RWPE1 (cell line): ENCODE measurements at regions of chr12 and their contacts with region 1.

Region 1: GRCh38 chr12:44960856-44961255 is 84.7 kb upstream of the NELL2 start:
- DNase-seq: no peak
- H3K27ac ChIP-seq: no peak overlapping the region
- CTCF ChIP-seq: no peak

Region 2: DNA sequence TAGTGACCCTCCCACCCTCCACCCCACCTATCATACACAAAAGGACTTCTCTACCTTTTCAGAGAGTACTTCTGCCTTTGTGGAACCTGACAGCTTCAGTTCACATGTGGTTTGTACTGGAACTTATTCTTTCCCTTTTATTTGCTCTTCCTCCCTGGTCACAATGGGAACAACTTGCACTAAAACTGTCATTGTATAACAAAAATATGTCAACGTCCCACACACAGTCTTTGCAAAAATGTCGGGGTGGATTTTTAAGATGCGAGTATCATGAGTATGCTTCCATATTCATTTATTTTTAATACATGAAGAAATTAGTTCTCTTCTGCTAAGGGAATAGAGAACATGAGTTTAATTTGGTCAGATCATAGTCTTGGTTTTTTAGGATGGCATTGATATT is 39.1 kb before region 1 on chr12:
- CTCF ChIA-PET with region 1: no interaction called
- POLR2A ChIA-PET with region 1: no interaction called
- DNase-seq: no peak
- H3K27ac ChIP-seq: no peak overlapping the region
- CTCF ChIP-seq: no peak

Region 3: DNA sequence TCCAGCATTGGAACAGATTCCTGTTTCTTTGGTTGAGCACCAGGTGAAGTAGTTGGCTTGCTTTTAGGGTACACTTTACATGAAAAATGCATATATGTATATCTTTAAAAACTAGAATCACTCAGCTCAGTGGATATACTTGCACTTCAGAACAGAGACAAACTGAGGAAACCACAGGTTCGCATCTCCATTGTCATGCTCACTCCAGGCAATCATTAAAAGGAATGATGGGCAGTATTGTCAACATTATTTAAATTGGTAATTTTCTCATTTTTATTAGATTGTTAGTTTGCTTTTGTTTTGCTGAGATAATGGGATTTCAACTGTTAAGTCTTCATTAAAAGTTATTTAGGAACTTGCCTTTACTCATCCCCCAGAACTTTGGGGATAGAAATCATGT is 13.7 kb before region 1 on chr12:
- CTCF ChIA-PET with region 1: interaction called, 11 read pairs
- POLR2A ChIA-PET with region 1: no interaction called
- DNase-seq: no peak
- H3K27ac ChIP-seq: no peak overlapping the region
- CTCF ChIP-seq: no peak

Region 4: GRCh38 chr12:45893240-45893639 is 932.4 kb after region 1 on chr12:
- CTCF ChIA-PET with region 1: no interaction called
- POLR2A ChIA-PET with region 1: no interaction called
- DNase-seq: no peak
- H3K27ac ChIP-seq: no peak overlapping the region
- CTCF ChIP-seq: no peak